RWPE1 (cell line): ENCODE measurements at regions of chr14 and their contacts with region 1.

Region 1: DNA sequence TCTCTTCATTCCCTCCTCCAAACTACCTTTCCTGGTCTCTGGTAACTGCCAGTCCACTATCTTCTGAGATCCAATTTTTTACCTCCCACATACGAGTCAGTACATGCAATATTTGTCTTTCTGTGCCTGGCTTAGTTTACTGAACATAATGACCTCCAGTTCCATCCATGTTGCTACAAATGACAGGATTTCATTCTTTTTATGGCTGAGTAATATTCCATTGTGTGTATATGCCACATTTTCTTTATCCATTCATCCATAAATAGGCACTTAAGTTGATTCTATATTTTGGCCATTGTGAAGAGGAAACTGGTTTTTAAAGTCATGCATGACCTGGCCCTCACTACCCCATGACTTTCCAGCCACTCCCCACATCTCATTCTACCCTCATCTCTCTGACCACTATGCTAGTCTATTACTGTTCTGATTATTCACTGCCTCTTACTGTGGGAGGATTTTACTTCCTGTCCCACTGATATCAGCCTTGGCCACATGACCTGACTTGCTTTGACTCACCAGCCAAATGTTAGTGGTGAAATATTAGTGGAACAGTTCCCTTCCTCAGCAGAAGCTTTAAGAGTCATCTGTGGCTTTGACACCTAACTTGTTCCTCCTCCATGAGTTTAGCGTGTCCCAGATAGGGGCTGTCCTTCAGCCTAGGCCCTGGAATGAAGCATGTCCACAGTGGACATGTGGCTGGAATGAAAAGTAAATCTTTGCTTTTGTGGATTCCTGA is 52.2 kb downstream of the GOLGA5 start:
- DNase-seq: peak; percentile 54
- H3K27ac ChIP-seq: no peak overlapping the region
- CTCF ChIP-seq: no peak

Region 2: DNA sequence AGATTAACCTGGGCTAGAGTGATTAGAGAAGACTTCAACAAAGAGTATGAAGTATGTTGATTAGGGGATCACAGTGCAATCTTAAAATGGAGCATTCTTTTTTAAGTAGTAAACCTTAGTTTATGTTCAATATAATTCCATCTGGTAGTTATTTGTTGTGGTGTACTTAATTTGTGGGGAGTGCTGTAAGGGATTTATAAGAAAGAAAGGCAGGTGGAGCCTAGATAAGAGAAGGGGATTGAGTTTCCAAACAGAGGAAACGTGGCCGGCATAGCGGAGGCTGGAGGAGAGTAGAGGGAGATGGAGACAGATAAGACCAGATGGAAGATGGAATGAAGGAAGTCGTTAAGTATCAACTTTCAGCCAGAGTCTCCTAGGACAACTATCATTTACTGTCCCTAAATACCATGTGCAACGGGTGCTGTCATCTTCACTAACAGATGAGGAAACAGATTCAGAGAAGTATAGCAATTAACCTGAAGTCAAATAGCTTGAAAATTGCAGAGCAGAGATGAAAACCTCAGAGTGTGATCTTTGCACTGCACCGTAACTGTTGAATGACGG is 14.1 kb before region 1 on chr14:
- CTCF ChIA-PET with region 1: no interaction called
- POLR2A ChIA-PET with region 1: no interaction called
- DNase-seq: no peak
- H3K27ac ChIP-seq: no peak overlapping the region
- CTCF ChIP-seq: no peak

Region 3: GRCh38 chr14:92880869-92881289 is 34.5 kb after region 1 on chr14:
- CTCF ChIA-PET with region 1: interaction called, 11 read pairs
- POLR2A ChIA-PET with region 1: no interaction called
- DNase-seq: peak; percentile 72
- H3K27ac ChIP-seq: no peak overlapping the region
- CTCF ChIP-seq: no peak

Region 4: GRCh38 chr14:93007225-93007997 is 161.1 kb after region 1 on chr14:
- CTCF ChIA-PET with region 1: no interaction called
- POLR2A ChIA-PET with region 1: no interaction called
- DNase-seq: peak; percentile 75
- H3K27ac ChIP-seq: peak overlapping the region; percentile 74
- CTCF ChIP-seq: no peak